MCF 10A (cell line): ENCODE measurements at regions of chr20 and their contacts with region 1.

Region 1: GRCh38 chr20:43456809-43457639 is 672 bp upstream of the SRSF6 start:
- DNase-seq: peak; percentile 94
- H3K4me3 Mint-ChIP-seq: peak overlapping the region; percentile 91
- H3K27ac Mint-ChIP-seq: peak overlapping the region; percentile 99
- H3K4me1 Mint-ChIP-seq: peaks cover 14% of the 10 kb centered on the region
- H3K27me3 Mint-ChIP-seq: peaks cover 16% of the 10 kb centered on the region
- CTCF ChIP-seq: no peak

Region 2: DNA sequence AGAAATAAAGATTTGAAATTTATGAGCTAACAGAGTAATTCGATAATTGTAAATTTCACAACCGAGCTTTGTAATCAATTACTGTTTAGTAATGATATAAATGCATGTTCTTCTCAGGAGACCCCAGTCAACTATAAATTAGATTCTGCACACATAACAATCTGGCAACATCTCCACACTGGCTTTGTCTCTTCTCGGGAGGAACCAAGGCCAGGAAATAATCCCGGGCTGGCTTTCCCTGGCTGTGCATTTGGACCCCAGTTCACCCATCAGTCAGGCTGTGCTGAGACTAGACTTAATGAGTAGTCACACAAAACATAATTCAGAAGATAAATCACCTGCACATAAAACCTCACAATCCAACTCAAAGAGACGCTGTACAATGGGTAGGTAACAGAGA is 332.8 kb before region 1 on chr20:
- CTCF ChIA-PET with region 1: no interaction called
- POLR2A ChIA-PET with region 1: no interaction called
- intact Hi-C with region 1: no loop called
- DNase-seq: no peak
- H3K4me3 Mint-ChIP-seq: no peak overlapping the region
- H3K27ac Mint-ChIP-seq: no peak overlapping the region
- H3K4me1 Mint-ChIP-seq: no peaks in the 10 kb centered on the region
- H3K27me3 Mint-ChIP-seq: no peaks in the 10 kb centered on the region
- CTCF ChIP-seq: no peak

Region 3: GRCh38 chr20:43300901-43301300 is 156.1 kb before region 1 on chr20:
- CTCF ChIA-PET with region 1: no interaction called
- POLR2A ChIA-PET with region 1: no interaction called
- intact Hi-C with region 1: no loop called
- DNase-seq: no peak
- H3K4me3 Mint-ChIP-seq: no peak overlapping the region
- H3K27ac Mint-ChIP-seq: no peak overlapping the region
- H3K4me1 Mint-ChIP-seq: no peaks in the 10 kb centered on the region
- H3K27me3 Mint-ChIP-seq: no peaks in the 10 kb centered on the region
- CTCF ChIP-seq: no peak

Region 4: DNA sequence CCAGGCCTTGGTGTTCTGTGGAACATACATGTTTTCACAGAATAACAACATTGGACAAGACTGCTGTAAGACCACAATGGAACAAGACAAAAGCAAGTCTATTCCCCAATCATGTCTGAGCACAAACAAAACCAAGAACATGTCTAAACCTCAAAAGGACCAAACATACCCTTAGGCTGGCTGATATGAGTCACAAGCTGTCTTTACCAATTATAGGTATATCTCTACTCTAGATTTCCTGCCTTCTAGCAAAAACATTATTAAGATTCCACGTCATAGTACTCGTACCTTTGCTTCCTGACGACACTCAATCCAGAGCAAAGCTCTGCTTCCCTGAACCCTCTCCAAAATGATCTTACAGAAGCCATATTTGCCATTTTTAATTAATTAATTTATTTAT is 35.1 kb after region 1 on chr20:
- CTCF ChIA-PET with region 1: interaction called, 3 read pairs
- POLR2A ChIA-PET with region 1: interaction called, 21 read pairs
- intact Hi-C with region 1: no loop called
- DNase-seq: peak; percentile 88
- H3K4me3 Mint-ChIP-seq: no peak overlapping the region
- H3K27ac Mint-ChIP-seq: peak overlapping the region; percentile 77
- H3K4me1 Mint-ChIP-seq: no peaks in the 10 kb centered on the region
- H3K27me3 Mint-ChIP-seq: no peaks in the 10 kb centered on the region
- CTCF ChIP-seq: no peak

Region 5: DNA sequence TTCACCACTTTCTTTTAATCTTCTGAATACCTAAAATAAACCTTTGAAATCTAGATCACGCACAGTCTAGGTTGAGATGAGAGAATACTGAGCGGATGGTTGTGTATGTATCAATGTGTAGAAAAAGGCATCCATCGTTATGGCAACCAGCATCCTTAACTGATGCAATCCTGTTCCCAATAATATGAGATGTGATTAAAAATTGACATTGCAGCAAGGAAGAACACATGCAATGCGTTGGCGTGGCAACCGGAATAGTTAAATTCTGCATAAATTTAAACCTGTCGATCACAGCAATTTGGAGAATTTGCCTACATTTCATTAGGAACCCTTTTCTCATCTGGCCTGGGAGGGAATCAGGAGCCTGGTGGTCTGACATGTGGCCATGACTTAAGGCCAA is 49.2 kb after region 1 on chr20:
- CTCF ChIA-PET with region 1: interaction called, 3 read pairs
- POLR2A ChIA-PET with region 1: interaction called, 10 read pairs
- intact Hi-C with region 1: loop called (anchors 5 kb)
- DNase-seq: no peak
- H3K4me3 Mint-ChIP-seq: no peak overlapping the region
- H3K27ac Mint-ChIP-seq: no peak overlapping the region
- H3K4me1 Mint-ChIP-seq: no peaks in the 10 kb centered on the region
- H3K27me3 Mint-ChIP-seq: no peaks in the 10 kb centered on the region
- CTCF ChIP-seq: no peak

Region 6: GRCh38 chr20:43514062-43514999 is 57.3 kb after region 1 on chr20:
- CTCF ChIA-PET with region 1: interaction called, 6 read pairs
- POLR2A ChIA-PET with region 1: interaction called, 52 read pairs
- intact Hi-C with region 1: loop called (anchors 5 kb)
- DNase-seq: peak; percentile 99
- H3K4me3 Mint-ChIP-seq: peak overlapping the region; percentile 99
- H3K27ac Mint-ChIP-seq: peak overlapping the region; percentile 89
- H3K4me1 Mint-ChIP-seq: peaks cover 20% of the 10 kb centered on the region
- H3K27me3 Mint-ChIP-seq: no peaks in the 10 kb centered on the region
- CTCF ChIP-seq: peak; percentile 11

Region 7: GRCh38 chr20:43590392-43591323 is 133.6 kb after region 1 on chr20 and contains the start of gene IFT52:
- CTCF ChIA-PET with region 1: interaction called, 3 read pairs
- POLR2A ChIA-PET with region 1: interaction called, 32 read pairs
- intact Hi-C with region 1: loop called (anchors 10 kb)
- DNase-seq: peak; percentile 93
- H3K4me3 Mint-ChIP-seq: peak within 1 kb of the TSS; percentile 84
- H3K27ac Mint-ChIP-seq: peak within 1 kb of the TSS; percentile 92
- H3K4me1 Mint-ChIP-seq: peaks cover 6% of the 10 kb centered on the region
- H3K27me3 Mint-ChIP-seq: no peaks in the 10 kb centered on the region
- CTCF ChIP-seq: no peak
- total RNA-seq, gene IFT52: 21.8 and 24.2 TPM in 2 replicates

Region 8: DNA sequence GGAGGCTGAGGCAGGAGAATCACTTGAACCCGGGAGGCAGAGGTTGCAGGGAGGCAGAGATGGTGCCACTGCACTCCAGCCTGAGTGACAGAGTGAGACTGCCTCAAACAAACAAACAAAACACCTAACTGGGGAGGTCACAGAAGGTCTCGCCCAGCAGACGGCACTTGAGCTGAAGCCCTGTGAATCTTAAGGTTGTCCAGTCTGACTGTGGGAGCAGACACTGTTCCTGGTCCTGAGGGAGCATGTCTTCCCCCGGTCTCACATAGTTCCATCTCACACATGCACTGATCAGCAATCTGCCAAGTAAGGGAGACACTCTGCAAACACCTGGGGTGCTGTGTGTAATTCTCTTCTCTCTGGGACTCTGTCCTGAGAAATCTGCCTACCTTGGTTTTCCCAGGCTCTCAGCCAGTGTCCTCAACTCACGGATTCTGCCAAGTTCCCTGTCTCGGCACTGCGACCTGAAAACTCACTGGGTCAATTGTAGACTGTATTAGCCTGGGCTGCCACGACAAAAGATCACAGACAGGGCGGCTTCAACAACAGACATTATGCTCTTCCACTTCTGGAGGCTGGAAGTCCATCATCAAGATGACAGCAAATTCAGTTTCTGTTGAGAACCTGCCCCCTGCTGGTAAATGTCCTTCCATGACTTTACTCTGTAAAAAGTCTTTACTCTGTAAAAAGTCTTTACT is 635.7 kb after region 1 on chr20:
- CTCF ChIA-PET with region 1: interaction called, 3 read pairs
- POLR2A ChIA-PET with region 1: interaction called, 10 read pairs
- intact Hi-C with region 1: no loop called
- DNase-seq: peak; percentile 61
- H3K4me3 Mint-ChIP-seq: no peak overlapping the region
- H3K27ac Mint-ChIP-seq: no peak overlapping the region
- H3K4me1 Mint-ChIP-seq: peaks cover 16% of the 10 kb centered on the region
- H3K27me3 Mint-ChIP-seq: no peaks in the 10 kb centered on the region
- CTCF ChIP-seq: peak; percentile 52